AG04449 (cell line): ENCODE measurements at regions of chr1 and their contacts with region 1.

Region 1: DNA sequence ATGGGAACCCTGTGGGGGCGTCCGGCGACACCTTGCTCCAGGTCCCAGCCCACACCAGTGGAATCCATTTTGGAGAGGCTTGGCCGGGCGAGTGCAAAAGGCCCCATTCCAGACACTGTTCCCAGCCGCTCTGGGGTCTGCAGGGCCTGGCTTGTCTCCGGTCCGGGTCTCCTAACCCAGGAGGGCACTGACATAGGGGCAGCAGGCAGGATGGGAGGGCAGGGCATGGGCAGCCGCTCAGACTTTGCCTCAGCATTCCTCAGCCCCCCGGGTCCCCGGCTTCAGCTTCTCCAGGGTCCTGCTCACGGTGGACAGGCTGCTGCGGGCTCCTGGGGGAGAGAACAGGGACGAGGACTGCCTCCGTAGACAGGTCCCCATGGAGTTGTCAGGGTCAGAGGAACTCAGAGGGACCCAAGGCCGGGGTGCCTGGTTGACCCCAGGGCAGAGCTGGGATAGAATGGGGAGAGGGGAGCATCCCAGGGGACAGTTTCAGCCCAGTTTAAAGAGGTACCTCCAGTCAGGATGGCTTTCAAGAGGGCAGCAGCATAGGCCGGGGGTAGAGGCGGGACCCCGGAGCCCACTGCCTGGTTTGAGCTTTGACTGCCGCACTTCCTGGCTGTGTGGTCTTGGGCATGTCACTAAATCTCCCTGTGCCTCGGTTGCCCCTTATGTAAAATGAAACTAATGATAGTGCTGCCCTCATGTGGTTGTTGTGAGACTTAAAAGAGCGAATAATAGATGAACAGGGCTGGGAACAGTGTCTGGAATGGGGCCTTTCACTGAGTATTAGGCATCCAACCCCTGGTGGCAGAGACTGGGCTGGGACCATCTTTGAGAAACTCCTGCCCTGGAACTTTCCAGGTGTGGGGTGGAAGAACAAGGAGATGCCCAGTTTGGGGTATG is 3.7 kb downstream of the KNCN start:
- DNase-seq: no peak
- H3K4me3 ChIP-seq: no peak overlapping the region
- CTCF ChIP-seq: peak; percentile 32

Region 2: DNA sequence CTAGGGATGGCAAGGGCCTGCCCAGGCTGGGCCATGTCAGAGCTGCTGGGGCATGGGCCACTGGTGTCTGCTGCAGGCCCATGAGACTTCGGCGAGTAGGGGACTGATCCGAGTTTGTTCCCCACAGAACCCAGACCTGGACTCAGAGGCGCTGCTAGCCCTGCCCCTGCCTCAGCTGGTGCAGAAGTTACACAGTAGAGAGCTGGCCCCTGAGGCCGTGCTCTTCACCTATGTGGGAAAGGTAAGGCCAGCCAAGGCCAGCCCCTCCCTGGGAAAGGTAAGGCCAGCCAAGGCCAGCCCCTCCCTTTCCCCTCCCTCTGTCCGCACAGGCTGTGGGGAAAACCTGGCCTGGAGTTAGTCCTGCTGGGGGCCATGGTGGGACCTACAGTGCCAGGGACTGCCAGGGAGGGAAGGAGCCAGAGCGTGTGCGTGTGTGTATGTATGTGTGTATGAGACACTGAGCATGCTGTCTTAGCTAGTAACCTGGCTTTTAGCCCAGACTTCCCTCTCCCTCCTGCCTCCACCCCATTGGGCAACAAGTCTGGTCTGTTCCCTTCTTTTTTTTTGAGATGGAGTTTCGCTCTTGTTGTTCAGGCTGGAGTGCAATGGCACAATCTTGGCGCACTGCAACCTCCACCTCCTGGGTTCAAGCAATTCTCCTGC is 145.6 kb before region 1 on chr1:
- CTCF ChIA-PET with region 1: interaction called, 32 read pairs
- POLR2A ChIA-PET with region 1: no interaction called
- DNase-seq: peak; percentile 87
- H3K4me3 ChIP-seq: no peak overlapping the region
- CTCF ChIP-seq: no peak

Region 3: GRCh38 chr1:46487818-46488218 is 59.9 kb before region 1 on chr1:
- CTCF ChIA-PET with region 1: no interaction called
- POLR2A ChIA-PET with region 1: no interaction called
- DNase-seq: no peak
- H3K4me3 ChIP-seq: no peak overlapping the region
- CTCF ChIP-seq: peak; percentile 38

Region 4: DNA sequence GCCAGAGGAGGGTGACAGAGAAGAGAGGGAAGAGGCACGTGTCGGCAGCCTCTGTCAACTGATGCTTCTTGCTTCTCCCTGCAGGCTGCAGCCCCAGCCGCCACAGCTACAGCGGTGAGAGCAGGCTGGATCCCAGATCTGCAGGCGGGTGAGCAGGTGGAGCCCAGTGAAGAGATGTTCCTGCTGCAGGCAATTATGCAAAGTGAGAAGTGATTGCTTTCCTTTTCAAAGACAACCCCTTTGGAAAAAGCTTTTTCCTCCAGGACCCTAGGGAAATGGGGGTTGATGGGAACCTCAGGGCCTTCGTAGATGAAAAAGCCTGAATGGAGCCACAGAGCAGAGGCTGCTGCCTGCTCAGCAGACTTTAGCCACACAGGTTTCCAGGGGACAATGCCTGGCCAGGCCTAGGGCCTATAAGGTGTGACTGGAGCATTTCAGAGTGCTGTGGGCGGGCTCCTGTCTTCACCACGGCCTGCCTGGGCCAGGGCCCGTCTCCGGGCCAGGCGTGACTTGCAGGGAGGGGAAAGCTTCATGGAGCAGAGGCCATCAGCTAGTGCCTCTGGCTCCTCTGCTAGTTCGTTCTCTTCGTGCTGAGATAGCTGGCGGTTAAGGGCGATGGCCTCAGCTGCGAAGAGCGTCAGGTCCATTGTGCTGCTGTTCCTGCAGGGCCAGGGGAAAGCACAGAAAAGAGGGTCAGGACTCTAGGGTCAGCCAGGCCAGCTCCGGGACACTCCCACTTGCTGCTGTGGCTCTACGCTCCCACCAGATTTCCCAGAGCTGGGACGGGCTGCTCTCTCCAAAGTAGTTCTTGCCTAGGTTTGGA is 10.6 kb after region 1 on chr1:
- CTCF ChIA-PET with region 1: interaction called, 39 read pairs
- POLR2A ChIA-PET with region 1: no interaction called
- DNase-seq: no peak
- H3K4me3 ChIP-seq: no peak overlapping the region
- CTCF ChIP-seq: no peak

Region 5: DNA sequence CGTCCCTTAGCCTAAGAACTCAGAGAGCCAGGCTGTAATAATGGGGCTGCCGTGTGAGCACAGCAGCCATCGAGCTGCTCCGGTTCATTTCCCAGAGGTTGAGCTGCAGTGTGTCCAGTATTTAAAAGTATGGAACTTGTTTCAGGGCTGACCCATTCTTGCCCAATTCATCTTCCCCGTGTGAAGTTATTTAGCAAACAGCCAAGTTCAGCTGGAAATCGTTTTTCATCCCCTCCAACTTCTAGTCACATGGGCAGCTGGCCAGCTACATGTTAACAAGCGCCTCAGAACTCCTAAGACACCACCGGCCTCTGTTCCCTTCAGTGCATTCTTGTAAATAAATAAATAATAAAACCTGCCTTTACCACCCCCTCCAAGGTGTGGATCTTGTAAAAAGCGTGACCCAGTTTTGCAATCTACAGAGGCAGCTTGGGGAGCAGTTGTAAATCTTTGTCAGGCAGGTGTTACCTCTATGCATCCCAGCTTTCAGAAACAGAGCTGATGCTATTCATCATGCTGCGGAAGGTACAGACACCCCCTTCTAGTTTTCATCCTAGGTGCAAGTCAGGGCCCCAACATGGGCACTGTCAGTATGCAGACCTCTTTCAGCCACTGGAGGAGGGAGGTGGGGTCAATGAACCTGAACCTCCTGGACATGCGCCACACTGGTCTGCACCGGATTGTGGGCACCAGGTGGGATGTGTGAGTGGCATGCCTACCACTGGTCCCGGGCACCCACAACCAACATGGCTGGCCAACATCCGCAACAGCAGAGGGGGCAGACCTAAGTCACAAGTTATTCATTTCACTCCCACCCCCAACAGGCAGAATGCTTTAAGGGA is 22.4 kb after region 1 on chr1:
- CTCF ChIA-PET with region 1: interaction called, 13 read pairs
- POLR2A ChIA-PET with region 1: no interaction called
- DNase-seq: no peak
- H3K4me3 ChIP-seq: no peak overlapping the region
- CTCF ChIP-seq: no peak

Region 6: DNA sequence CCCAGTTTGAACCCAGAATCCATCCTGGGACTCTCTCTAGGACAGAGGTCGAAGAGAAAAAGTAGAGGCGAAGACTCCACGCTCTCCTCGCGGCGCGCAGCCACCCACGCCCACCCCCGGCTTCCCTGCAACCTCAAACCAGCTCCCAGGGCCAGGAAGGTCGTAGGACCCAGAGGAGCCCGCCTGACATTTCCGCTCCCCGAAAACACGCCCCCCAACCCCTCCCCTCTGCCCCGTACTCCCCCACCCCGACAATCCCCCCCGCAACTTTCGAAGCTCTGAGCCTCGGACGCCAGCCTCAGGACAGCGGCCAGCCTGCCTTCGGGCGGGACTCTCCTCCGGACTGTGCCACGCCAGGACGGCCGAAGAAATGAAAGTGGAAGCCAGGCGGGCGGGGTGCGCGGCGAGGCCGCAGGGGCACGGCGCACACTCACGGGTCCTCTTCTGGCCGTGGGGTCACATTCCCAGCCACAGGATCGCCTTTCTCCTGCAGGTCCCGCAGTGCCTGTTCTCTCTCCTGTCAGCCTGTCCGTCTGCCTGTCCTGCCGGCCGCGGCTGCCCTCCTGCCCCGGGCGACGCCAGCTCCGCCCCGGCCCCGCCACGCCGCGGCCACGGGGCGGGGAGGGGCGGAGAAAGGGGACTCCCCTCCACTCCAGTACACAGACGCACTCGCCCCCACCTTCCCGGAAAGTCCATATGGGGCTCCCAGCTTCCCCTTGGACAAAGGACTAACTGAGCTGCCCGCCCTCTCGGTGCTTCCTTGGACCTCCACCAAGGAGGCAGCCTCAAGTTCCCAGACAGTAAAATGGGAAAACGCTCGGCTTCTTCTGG is 68.8 kb after region 1 on chr1 and contains the start of gene MOB3C:
- CTCF ChIA-PET with region 1: no interaction called
- POLR2A ChIA-PET with region 1: no interaction called
- DNase-seq: peak; percentile 28
- H3K4me3 ChIP-seq: peak within 1 kb of the TSS; percentile 88
- CTCF ChIP-seq: no peak